T-cell (primary cell): ENCODE measurements at regions of chr1 and their contacts with region 1.

Region 1: GRCh38 chr1:155978325-155978972 is at the start of gene ARHGEF2:
- DNase-seq: peak; percentile 46 to 83 (median 68)
- ATAC-seq: peak; percentile 68 to 74 (median 72)
- H3K4me3 ChIP-seq: peak within 1 kb of the TSS; percentile 91 to 97
- H3K4me3 Mint-ChIP-seq: peak within 1 kb of the TSS; percentile 85 to 97 (median 97)
- H3K27ac ChIP-seq: peak within 1 kb of the TSS; percentile 64
- H3K27ac Mint-ChIP-seq: peak within 1 kb of the TSS; percentile 93 to 94
- H3K4me1 ChIP-seq: peaks cover 37 to 87% of the 10 kb centered on the region in 2 experiments
- H3K4me1 Mint-ChIP-seq: peaks cover 68 to 86% (median 77%) of the 10 kb centered on the region in 3 donors
- H3K27me3 ChIP-seq: no peaks in the 10 kb centered on the region
- H3K27me3 Mint-ChIP-seq: no peaks in the 10 kb centered on the region
- total RNA-seq, gene ARHGEF2: 110 to 174 (median 167) TPM

Region 2: GRCh38 chr1:155308493-155309422 is 669.7 kb before region 1 on chr1 and contains the start of gene FDPS:
- CTCF ChIA-PET with region 1: no interaction called
- POLR2A ChIA-PET with region 1: interaction called in 1 of 2 experiments, 10 read pairs
- DNase-seq: peak; percentile 87 to 99 (median 97)
- ATAC-seq: peak; percentile 98 to 100 (median 99)
- H3K4me3 ChIP-seq: peak within 1 kb of the TSS; percentile 89
- H3K4me3 Mint-ChIP-seq: peak within 1 kb of the TSS; percentile 90 to 95 (median 92)
- H3K27ac ChIP-seq: peak within 1 kb of the TSS; percentile 98
- H3K27ac Mint-ChIP-seq: peak within 1 kb of the TSS; percentile 92 to 93
- H3K4me1 ChIP-seq: peaks cover 5 to 30% of the 10 kb centered on the region in 2 experiments
- H3K4me1 Mint-ChIP-seq: peaks cover 30 to 32% (median 31%) of the 10 kb centered on the region in 3 donors
- H3K27me3 ChIP-seq: no peaks in the 10 kb centered on the region
- H3K27me3 Mint-ChIP-seq: no peaks in the 10 kb centered on the region
- total RNA-seq, gene FDPS: 66.7 to 100 (median 93.0) TPM

Region 3: DNA sequence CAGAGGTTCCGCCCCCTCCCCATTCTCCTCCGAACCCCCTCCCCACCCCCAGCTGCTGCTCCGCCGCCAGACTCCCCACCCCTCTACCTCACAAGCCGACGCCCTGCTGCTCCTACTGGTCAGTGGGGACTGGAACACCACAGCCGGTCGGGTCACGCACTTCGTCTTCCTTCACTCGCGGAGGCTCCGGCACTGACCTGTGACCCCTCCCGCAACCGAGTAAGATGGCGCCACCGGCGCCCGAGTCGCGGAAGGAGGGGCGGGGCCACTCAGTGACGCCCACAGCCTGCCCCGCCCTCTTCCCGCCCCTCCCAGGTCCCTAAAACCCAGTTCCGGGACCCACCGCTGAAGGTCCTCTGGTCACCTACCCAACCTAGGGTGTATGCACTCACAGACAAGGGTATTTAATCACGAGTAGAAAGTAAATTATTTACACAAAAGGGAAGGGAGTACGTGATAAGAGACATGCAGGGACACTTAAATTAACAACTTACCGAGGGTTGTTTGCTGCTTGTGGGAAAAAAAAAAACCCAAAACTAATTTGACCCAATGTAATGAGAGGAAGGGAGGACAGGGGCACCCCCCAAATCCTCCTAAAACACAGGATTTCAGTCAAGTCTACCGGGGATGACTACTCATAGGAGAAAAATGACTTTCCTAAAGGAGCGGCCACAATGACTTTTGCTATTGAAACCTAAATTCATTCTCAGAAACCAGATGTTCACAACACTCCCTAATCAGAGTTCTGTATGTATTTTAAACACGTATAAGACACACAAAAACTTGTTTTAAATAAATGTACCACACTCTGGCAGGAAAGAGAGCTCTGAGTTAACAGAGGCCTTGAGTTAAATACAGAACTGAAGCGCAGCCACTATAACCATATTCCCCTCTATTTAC is 67.0 kb before region 1 on chr1 and contains the start of gene RIT1:
- CTCF ChIA-PET with region 1: interaction called in 1 of 2 experiments, 3 read pairs
- POLR2A ChIA-PET with region 1: interaction called, 3 to 11 read pairs
- DNase-seq: peak; percentile 62 to 91 (median 78)
- ATAC-seq: peak; percentile 96 to 99 (median 98)
- H3K4me3 ChIP-seq: peak within 1 kb of the TSS; percentile 77 to 90
- H3K4me3 Mint-ChIP-seq: peak within 1 kb of the TSS; percentile 93 to 98 (median 97)
- H3K27ac ChIP-seq: peak within 1 kb of the TSS; percentile 78
- H3K27ac Mint-ChIP-seq: peak within 1 kb of the TSS; percentile 95 to 97
- H3K4me1 ChIP-seq: peaks cover 11 to 24% of the 10 kb centered on the region in 2 experiments
- H3K4me1 Mint-ChIP-seq: peaks cover 24 to 31% (median 26%) of the 10 kb centered on the region in 3 donors
- H3K27me3 ChIP-seq: no peaks in the 10 kb centered on the region
- H3K27me3 Mint-ChIP-seq: no peaks in the 10 kb centered on the region
- total RNA-seq, gene RIT1: 35.3 to 56.4 (median 39.2) TPM

Region 4: GRCh38 chr1:155934097-155934935 is 44.1 kb before region 1 on chr1 and contains the start of gene KHDC4:
- CTCF ChIA-PET with region 1: interaction called in 1 of 2 experiments, 10 read pairs
- POLR2A ChIA-PET with region 1: interaction called, 13 to 15 read pairs
- DNase-seq: peak; percentile 84 to 99 (median 96)
- ATAC-seq: peak; percentile 94 to 97 (median 96)
- H3K4me3 ChIP-seq: peak within 1 kb of the TSS; percentile 66 to 90
- H3K4me3 Mint-ChIP-seq: no peak within 1 kb of the TSS
- H3K27ac ChIP-seq: peak within 1 kb of the TSS; percentile 84
- H3K27ac Mint-ChIP-seq: peak within 1 kb of the TSS in 1 of 2 donors; percentile 74
- H3K4me1 ChIP-seq: peaks cover 21 to 41% of the 10 kb centered on the region in 2 experiments
- H3K4me1 Mint-ChIP-seq: peaks cover 34 to 42% (median 37%) of the 10 kb centered on the region in 3 donors
- H3K27me3 ChIP-seq: no peaks in the 10 kb centered on the region
- H3K27me3 Mint-ChIP-seq: no peaks in the 10 kb centered on the region
- total RNA-seq, gene KHDC4: 44.5 to 102 (median 85.6) TPM

Region 5: DNA sequence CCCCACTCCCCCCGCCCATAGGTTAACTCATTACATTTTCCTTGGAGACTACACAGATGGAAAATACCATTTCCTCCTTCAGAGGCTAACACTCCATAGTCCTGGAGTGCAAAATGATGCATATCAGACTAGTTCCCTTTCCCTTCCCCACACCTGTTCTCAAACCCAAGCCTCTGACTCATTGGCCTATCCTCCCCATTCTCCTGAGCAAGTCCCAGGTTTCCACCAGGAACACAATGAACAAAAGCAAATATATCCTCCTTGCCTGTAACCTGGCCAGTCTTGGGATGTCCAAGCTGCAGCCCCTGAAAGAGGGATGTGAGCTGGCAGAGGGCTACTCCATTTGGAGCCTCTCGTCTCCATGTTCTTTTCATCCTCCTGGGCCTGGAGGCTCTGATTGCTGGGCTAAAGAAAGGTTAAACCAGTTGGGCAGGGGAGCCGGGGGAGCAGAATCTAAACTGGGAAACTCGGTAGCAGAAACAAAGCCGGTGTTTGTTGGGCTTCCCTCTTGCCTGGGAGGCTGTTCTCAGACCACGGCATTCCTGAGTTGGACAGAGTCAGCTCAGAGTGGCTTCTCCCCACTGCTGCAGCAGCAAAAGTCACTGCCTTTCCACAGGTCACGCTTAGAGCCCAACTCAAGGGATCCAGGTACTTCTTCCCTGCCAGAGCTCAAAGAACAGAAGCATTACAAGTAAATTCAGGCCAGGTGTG is 28.4 kb after region 1 on chr1:
- CTCF ChIA-PET with region 1: no interaction called
- POLR2A ChIA-PET with region 1: interaction called in 1 of 2 experiments, 10 read pairs
- DNase-seq: no peak
- ATAC-seq: no peak
- H3K4me3 ChIP-seq: no peak overlapping the region
- H3K4me3 Mint-ChIP-seq: no peak overlapping the region
- H3K27ac ChIP-seq: no peak overlapping the region
- H3K27ac Mint-ChIP-seq: peak overlapping the region in 1 of 2 donors; percentile 51
- H3K4me1 ChIP-seq: peaks cover 7 to 25% of the 10 kb centered on the region in 2 experiments
- H3K4me1 Mint-ChIP-seq: peaks cover 14 to 39% (median 29%) of the 10 kb centered on the region in 3 donors
- H3K27me3 ChIP-seq: no peaks in the 10 kb centered on the region
- H3K27me3 Mint-ChIP-seq: no peaks in the 10 kb centered on the region

Region 6: GRCh38 chr1:156076501-156077429 is 98.3 kb after region 1 on chr1:
- CTCF ChIA-PET with region 1: no interaction called
- POLR2A ChIA-PET with region 1: no interaction called
- DNase-seq: peak in 1 of 35 experiments; percentile 23
- ATAC-seq: peak; percentile 28 to 65 (median 42)
- H3K4me3 ChIP-seq: no peak overlapping the region
- H3K4me3 Mint-ChIP-seq: peak overlapping the region in 1 of 3 donors; percentile 46
- H3K27ac ChIP-seq: no peak overlapping the region
- H3K27ac Mint-ChIP-seq: peak overlapping the region in 1 of 2 donors; percentile 6
- H3K4me1 ChIP-seq: peaks cover 0 to 13% of the 10 kb centered on the region in 2 experiments
- H3K4me1 Mint-ChIP-seq: peaks cover 0 to 8% (median 2%) of the 10 kb centered on the region in 3 donors
- H3K27me3 ChIP-seq: peaks cover 0 to 32% of the 10 kb centered on the region in 2 experiments
- H3K27me3 Mint-ChIP-seq: peaks cover 0 to 7% of the 10 kb centered on the region in 2 donors